Endothelial cell of umbilical vein (primary cell): ENCODE measurements at regions of chr2 and their contacts with region 1.

Region 1: DNA sequence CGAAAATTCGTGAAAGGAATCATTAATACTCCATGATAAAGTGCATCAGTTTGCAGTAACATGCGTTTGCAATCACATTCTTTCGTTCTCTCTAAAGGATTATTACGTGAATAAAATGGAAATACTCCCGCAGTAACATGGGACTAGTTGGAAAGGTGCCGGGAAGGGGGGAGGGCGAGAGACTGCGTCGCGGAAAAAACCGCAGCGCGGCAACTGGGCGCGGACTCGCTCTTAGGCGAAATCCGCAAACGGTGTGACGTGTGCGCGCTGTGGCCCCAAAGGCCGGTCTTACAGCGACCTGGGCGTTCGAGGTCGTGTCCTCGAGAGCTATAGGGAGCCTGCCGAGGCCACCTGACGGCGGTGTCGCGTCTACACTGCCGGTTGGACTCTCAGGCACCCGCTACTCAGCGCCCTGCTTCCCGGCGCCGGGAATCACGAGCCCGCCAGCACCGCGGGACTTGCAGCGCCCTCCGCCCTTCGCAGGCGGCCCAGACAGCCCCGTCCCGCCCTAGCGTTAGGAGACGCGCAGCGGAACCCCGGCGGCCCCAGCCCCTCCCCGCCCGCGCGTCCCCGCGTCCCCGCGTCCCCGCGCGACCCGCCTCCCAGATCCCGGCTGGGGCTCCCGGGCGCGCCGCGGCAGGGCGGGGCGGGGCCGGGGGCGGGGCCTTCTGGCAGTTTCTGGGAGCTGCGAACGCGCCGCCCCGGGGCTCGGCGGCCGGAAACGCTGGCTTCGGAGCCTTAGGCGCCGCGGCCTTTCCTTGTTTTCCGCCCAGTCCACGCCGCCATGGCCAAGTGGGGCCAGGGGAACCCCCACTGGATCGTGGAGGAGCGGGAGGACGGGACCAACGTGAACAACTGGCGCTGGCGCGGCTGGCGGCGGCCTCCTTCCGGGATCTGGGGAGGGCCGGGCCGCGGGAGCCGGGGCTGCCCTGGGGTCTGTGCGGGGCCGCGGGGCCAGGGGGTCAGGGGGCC is 15.1 kb downstream of the C2orf74 start:
- DNase-seq: peak; percentile 94
- H3K4me3 ChIP-seq: peak overlapping the region; percentile 42 to 82 (median 61)
- H3K27ac ChIP-seq: peak overlapping the region; percentile 71
- H3K4me1 ChIP-seq: peaks cover 32% of the 10 kb centered on the region
- H3K27me3 ChIP-seq: peaks cover 0 to 2% of the 10 kb centered on the region in 2 experiments
- CTCF ChIP-seq: peak in 1 of 2 donors; percentile 7
- POLR2A ChIP-seq: peak; percentile 95

Region 2: GRCh38 chr2:60881047-60881932 is 295.8 kb before region 1 on chr2 and contains the start of gene REL:
- CTCF ChIA-PET with region 1: no interaction called
- POLR2A ChIA-PET with region 1: no interaction called
- dilution Hi-C with region 1: no loop called
- intact Hi-C with region 1: loop called (anchors 5 kb)
- DNase-seq: peak; percentile 90
- H3K4me3 ChIP-seq: peak within 1 kb of the TSS; percentile 94 to 99 (median 98)
- H3K27ac ChIP-seq: peak within 1 kb of the TSS; percentile 94
- H3K4me1 ChIP-seq: peaks cover 33% of the 10 kb centered on the region
- H3K27me3 ChIP-seq: no peaks in the 10 kb centered on the region
- CTCF ChIP-seq: peak in 1 of 2 donors; percentile 5
- POLR2A ChIP-seq: no peak
- total RNA-seq, gene REL: 11.7 and 12.8 TPM in 2 replicates

Region 3: DNA sequence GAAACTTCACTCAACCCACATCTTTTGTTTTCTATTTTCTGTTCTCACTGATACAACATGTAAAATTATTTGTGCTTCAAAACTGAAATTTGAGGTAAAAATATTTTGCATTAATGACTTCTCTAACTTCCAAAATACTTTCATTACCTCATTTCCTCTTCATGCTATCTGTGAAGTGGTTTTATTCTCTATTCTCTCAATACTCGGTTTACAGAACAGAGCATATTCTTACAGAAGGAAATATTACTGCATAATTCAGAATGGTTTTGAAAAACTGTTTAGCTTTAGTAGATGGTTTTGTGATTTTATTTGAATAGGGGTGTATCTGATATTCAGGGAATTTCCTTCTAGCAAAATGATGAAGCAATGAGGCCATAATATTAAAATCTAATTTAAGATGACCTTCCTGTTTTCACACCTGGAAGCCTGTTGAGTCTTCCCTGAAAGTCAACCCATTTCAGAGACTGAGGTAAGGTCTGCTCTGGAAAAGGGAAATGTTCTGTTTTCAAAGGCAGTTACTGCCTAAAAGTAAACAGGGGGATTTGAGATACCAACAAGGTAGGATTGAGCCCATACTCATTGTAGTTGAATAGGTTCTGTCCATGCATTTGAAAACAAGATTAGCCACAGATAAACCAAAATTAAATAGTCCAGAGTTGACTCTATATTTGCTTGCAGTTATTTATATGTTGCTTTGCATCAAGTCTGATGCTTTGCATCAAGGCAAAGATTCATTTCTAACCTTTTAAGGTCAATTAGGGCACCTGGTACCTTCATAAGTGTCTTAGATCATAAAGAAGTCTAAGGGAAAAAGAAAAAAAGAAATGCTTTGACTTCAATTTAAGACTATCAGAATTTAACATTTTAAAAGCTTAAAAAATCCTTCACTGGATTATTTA is 210.3 kb before region 1 on chr2:
- CTCF ChIA-PET with region 1: no interaction called
- POLR2A ChIA-PET with region 1: no interaction called
- dilution Hi-C with region 1: no loop called
- intact Hi-C with region 1: no loop called
- DNase-seq: no peak
- H3K4me3 ChIP-seq: no peak overlapping the region
- H3K27ac ChIP-seq: no peak overlapping the region
- H3K4me1 ChIP-seq: no peaks in the 10 kb centered on the region
- H3K27me3 ChIP-seq: no peaks in the 10 kb centered on the region
- CTCF ChIP-seq: no peak
- POLR2A ChIP-seq: no peak

Region 4: DNA sequence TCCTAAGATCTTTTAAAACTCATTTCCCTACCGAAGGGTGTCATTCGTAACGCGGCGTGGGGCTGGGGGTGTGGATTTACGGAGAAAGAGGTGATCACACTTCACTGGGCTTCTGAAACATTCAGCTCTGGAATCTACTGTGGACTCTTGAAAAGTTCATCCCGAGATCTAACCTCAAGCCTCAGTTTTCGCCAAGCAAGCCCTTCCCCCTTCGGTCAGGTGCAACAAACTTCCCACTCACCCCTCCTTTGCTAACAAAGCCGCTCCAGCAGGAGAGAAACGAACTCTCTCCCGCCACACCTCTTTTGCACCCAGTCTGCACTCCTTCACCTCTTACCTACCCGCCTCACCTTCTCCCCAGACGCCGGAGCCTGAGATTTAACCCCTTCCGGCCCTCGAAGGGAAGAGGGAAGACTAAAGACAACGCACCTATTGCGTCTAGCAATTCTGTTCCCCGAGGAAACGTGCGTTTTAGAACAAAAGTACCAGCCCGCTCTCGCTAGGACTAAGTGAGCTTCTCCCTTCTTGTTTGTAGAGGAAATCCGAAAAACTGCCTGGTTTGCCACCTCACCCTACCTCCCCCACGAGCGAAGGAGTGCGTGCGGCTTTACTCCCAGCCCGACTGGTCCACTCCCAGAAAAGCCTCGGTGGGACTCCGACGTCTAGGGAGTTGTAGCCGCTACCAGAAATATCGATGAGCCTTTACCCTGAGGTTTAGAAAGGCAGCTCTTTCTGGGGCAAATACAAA is 160.1 kb before region 1 on chr2:
- CTCF ChIA-PET with region 1: no interaction called
- POLR2A ChIA-PET with region 1: no interaction called
- dilution Hi-C with region 1: no loop called
- intact Hi-C with region 1: loop called (anchors 1 kb)
- DNase-seq: no peak
- H3K4me3 ChIP-seq: peak overlapping the region; percentile 73 to 98 (median 94)
- H3K27ac ChIP-seq: peak overlapping the region; percentile 67
- H3K4me1 ChIP-seq: peaks cover 22% of the 10 kb centered on the region
- H3K27me3 ChIP-seq: no peaks in the 10 kb centered on the region
- CTCF ChIP-seq: no peak
- POLR2A ChIP-seq: no peak

Region 5: DNA sequence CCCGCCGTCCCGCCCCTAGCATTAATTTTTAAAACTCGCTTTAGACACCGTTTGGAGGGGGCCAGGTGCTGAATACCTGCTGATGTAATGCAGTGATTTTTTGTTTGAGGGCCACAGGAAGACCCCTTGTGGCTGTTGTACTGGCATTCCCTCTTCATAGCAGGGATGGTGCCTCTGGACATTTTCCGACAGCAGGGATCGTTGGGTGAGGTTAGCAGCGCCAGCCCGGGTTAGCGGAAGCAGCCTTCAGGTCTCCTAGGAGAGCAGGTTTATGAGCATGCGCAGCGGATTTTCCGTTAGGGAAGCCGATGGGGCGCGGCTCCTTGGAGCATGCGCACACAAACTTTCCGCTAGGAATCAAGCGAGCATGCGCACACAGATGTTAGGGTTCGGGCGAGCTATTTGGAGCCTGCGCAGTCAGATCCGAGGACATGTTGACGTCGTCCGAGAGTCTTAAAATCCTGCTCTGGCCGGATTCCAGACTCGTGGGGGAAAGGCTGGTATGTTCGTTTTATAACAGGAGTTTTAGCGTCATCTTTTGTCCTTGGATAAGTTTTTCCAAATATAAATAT is 32.3 kb before region 1 on chr2:
- CTCF ChIA-PET with region 1: interaction called, 4 read pairs
- POLR2A ChIA-PET with region 1: interaction called, 5 read pairs
- dilution Hi-C with region 1: no loop called
- intact Hi-C with region 1: loop called (anchors 1 kb)
- DNase-seq: peak; percentile 100
- H3K4me3 ChIP-seq: peak overlapping the region; percentile 9 to 65 (median 65)
- H3K27ac ChIP-seq: peak overlapping the region; percentile 25
- H3K4me1 ChIP-seq: no peaks in the 10 kb centered on the region
- H3K27me3 ChIP-seq: no peaks in the 10 kb centered on the region
- CTCF ChIP-seq: no peak
- POLR2A ChIP-seq: peak; percentile 87

Region 6: DNA sequence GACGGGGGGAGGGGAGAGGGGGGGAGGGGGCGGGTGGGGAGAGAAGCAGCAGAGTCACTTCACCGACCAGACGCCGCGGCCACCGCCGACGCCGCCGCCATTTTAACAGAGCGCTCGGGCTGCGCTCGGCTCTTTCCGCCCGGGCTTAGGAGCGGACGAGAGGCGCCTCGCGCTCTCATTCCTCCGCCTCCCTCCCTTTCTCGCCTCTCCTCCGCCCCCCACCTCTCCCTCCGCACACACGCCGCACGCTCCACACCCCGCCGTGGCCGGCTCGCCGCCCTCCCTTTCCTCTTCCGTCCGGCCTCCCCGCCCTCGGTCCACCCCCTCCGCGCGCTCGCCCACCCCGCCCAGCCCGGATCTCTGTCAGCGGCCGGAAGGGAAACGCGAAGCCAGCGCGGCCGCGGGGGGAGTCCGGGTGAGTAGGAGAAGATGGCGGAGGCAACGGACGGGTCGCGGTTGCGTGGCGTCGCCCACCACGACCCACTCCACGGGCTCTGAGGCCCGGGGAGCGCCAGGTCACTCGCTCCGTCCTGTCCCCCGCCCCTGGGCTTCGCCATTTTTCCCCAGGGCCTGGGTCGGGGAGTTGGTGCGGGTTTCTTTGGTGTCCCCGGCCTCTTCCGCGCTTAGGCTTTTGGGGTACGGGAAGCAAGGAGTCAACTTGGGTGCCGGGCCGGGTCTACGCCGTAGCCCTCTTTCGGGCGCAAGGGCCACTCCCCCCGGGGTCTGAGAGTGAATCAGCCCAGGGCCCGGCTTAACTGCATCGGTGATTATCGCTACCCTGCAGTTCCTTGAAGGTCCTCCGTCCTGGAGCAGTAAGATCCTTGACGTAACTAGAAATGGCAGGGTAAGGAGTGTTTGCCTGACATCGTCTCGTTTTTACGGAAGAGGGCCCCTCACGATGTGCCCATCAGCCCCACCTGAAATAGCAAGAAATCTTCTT is 294.2 kb after region 1 on chr2 and contains the start of gene USP34:
- CTCF ChIA-PET with region 1: no interaction called
- POLR2A ChIA-PET with region 1: interaction called, 3 read pairs
- dilution Hi-C with region 1: no loop called
- intact Hi-C with region 1: loop called (anchors 1 kb)
- DNase-seq: peak; percentile 96
- H3K4me3 ChIP-seq: peak within 1 kb of the TSS; percentile 73 to 98 (median 94)
- H3K27ac ChIP-seq: peak within 1 kb of the TSS; percentile 96
- H3K4me1 ChIP-seq: peaks cover 12% of the 10 kb centered on the region
- H3K27me3 ChIP-seq: no peaks in the 10 kb centered on the region
- CTCF ChIP-seq: no peak
- POLR2A ChIP-seq: peak; percentile 89
- total RNA-seq, gene USP34: 96.9 and 98.3 TPM in 2 replicates

Region 7: DNA sequence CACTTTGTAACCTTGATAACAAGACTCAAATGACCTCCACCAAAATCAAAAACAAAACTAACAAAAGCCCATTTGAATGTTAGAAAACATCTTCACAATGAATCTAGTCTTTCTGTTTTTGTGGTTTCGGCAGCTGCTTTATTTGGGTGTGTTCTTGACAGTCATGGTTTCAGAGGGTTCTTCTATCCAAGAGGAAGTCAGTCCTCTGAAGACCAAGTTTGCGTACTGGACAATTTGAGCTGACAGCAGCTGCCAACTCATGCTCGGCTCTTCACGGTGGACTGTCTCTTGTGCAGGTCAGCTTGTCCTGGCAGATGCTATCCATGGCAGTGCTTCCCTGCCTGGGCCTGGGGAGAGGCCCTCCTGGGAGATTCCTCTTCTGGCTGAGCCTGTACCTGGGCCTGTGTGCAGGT is 1238.0 kb after region 1 on chr2:
- CTCF ChIA-PET with region 1: no interaction called
- POLR2A ChIA-PET with region 1: no interaction called
- dilution Hi-C with region 1: no loop called
- intact Hi-C with region 1: no loop called
- DNase-seq: no peak
- H3K4me3 ChIP-seq: no peak overlapping the region
- H3K27ac ChIP-seq: no peak overlapping the region
- H3K4me1 ChIP-seq: peaks cover 6% of the 10 kb centered on the region
- H3K27me3 ChIP-seq: no peaks in the 10 kb centered on the region
- CTCF ChIP-seq: no peak
- POLR2A ChIP-seq: no peak